MCF 10A (cell line): ENCODE measurements at regions of chr3 and their contacts with region 1.

Region 1: DNA sequence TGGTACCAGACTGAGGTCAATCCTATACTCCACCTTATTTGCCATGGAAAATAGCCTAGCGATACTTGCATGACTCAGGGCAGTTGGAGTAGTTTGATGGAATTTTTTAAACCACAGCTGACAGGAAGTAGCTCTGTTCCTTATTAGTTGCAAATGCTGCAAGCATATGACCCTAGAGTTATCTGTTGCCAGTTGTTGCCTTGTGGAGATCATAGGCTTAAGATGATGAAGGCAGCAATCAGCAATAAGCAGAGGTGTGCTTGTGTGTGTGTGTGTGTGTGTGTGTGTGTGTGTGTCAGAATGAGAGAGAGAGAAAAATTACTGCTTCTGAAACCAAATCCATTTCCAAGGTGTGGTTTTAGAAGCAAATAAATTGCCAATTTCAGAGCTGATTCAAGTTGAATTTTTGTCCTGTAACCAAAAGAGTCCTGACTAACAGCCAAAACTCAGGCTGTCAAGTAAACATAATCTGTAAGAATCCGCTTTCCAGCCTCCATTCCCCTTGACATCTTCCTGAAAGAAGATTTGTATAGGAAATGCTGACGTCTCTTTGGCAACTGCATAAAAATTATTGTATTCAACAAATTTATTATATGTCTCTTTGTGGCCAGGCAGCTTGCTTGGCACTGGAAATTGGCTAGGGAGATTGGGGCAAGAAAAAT is 141.2 kb downstream of the SERPINI1 start:
- DNase-seq: peak; percentile 51
- H3K4me3 Mint-ChIP-seq: no peak overlapping the region
- H3K27ac Mint-ChIP-seq: no peak overlapping the region
- H3K4me1 Mint-ChIP-seq: peaks cover 11% of the 10 kb centered on the region
- H3K27me3 Mint-ChIP-seq: peaks cover 26% of the 10 kb centered on the region
- CTCF ChIP-seq: no peak

Region 2: GRCh38 chr3:167861649-167862048 is 15.1 kb before region 1 on chr3:
- CTCF ChIA-PET with region 1: interaction called, 10 read pairs
- POLR2A ChIA-PET with region 1: interaction called, 11 read pairs
- intact Hi-C with region 1: no loop called
- DNase-seq: peak; percentile 64
- H3K4me3 Mint-ChIP-seq: peak overlapping the region; percentile 9
- H3K27ac Mint-ChIP-seq: peak overlapping the region; percentile 36
- H3K4me1 Mint-ChIP-seq: peaks cover 21% of the 10 kb centered on the region
- H3K27me3 Mint-ChIP-seq: no peaks in the 10 kb centered on the region
- CTCF ChIP-seq: no peak

Region 3: DNA sequence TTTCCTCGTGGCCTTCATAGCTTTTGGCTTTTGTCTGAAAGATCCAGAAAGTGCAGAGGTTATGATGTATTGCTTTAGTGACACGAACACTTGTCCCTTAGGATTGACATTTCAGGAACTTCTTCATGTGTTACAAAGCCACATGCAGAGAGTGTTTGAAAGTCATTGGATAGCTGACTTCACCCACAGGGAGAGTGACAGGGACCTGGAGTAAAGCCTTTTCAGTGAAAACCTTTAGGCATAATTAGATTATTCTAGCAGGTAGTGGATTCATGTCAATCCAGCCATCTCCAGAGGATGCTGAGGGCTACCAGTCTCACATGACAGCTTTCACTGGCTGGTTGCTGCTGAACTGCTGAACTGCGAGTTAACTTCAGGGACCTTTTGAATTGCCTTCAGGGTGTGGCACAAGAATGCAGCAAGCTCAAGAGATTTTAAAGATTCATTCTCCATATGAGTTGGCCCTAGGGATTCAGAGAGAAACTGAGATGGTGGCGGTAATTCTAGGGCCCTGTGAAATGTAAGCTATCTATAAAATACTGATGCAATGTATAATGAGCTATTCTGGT is 486.0 kb after region 1 on chr3:
- CTCF ChIA-PET with region 1: no interaction called
- POLR2A ChIA-PET with region 1: no interaction called
- intact Hi-C with region 1: no loop called
- DNase-seq: no peak
- H3K4me3 Mint-ChIP-seq: no peak overlapping the region
- H3K27ac Mint-ChIP-seq: no peak overlapping the region
- H3K4me1 Mint-ChIP-seq: no peaks in the 10 kb centered on the region
- H3K27me3 Mint-ChIP-seq: peaks cover 35% of the 10 kb centered on the region
- CTCF ChIP-seq: no peak